PC-9 (cell line): ENCODE measurements at regions of chr15 and their contacts with region 1.

Region 1: DNA sequence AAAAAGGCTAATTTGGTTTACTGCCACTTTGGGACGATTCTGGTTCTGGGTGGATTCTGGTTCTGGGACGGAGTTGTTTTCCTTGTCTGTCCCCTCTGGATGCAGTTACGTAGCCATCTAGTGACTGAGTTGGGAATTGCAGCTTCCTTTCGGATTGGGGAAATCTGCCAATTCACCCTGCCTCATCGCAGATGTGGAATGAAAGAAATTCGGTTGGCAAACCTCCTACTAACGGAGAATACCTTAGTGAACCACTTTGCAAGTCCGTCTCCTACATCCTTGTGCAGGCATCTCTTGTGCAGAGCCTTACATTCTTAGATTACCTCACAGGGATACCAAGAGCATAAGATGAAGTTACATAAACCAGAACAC is 31.5 kb upstream of the AP4E1 start:
- DNase-seq: peak; percentile 74 to 84
- H3K4me3 ChIP-seq: peak overlapping the region; percentile 48; the same call in 1 of the 2 replicates
- H3K27ac ChIP-seq: peak overlapping the region; percentile 36
- H3K4me1 ChIP-seq: peaks cover 19% of the 10 kb centered on the region
- H3K27me3 ChIP-seq: no peaks in the 10 kb centered on the region
- CTCF ChIP-seq: peak; percentile 96

Region 2: DNA sequence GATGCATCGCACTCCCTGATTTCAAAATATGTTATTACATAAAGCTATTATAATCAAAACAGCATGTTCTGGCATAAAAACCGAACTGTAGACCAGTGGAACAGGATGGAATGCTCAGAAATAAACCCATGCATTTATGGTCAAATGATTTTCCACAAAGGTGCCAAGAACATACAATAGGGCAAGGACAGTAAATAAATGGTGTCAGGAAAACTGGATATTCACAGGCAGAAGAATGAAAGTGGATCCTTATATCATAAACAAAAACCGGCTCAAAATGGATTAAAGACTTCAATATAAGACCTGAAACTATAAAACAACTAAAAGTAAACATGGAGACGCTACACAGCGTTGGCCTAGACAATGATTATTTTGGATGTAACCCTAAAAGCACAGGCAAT is 353.1 kb before region 1 on chr15:
- CTCF ChIA-PET with region 1: no interaction called
- POLR2A ChIA-PET with region 1: interaction called, 10 read pairs
- intact Hi-C with region 1: no loop called
- DNase-seq: no peak
- H3K4me3 ChIP-seq: no peak overlapping the region
- H3K27ac ChIP-seq: no peak overlapping the region
- H3K4me1 ChIP-seq: no peaks in the 10 kb centered on the region
- H3K27me3 ChIP-seq: no peaks in the 10 kb centered on the region
- CTCF ChIP-seq: no peak

Region 3: DNA sequence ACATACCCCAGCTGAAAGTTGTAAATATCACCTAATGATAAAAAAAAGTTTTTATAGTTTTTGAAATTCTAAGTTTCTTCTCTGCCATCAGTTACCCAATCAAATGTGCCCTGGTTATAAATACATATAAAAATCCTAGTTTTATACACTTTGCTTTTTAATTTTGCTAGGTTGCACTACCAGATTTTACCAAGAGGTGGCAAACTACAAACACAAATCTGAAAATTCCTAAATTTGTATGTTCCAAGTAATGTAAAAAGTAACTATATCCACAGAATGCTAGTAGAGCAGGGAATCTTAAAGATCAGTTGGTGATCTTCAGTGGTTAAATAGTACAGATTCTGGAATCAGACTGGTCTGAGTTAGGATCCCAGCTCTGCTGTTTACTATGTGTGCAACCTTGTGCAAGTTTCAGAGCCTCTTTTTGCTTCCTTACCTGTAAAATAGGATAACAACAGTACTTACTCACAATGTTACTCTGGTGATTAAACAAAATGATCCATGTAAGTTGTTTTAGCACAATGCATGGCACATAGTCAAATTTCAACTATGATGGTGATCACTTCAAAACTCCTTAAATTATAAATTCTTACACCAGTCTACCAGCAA is 201.3 kb before region 1 on chr15:
- CTCF ChIA-PET with region 1: no interaction called
- POLR2A ChIA-PET with region 1: no interaction called
- intact Hi-C with region 1: loop called (anchors 2 kb)
- DNase-seq: no peak
- H3K4me3 ChIP-seq: no peak overlapping the region
- H3K27ac ChIP-seq: no peak overlapping the region; the same call in 1 of the 2 replicates
- H3K4me1 ChIP-seq: no peaks in the 10 kb centered on the region
- H3K27me3 ChIP-seq: no peaks in the 10 kb centered on the region
- CTCF ChIP-seq: peak; percentile 84